ENCODE measurements at regions of chr19 and their contacts with region 1.

Region 1: DNA sequence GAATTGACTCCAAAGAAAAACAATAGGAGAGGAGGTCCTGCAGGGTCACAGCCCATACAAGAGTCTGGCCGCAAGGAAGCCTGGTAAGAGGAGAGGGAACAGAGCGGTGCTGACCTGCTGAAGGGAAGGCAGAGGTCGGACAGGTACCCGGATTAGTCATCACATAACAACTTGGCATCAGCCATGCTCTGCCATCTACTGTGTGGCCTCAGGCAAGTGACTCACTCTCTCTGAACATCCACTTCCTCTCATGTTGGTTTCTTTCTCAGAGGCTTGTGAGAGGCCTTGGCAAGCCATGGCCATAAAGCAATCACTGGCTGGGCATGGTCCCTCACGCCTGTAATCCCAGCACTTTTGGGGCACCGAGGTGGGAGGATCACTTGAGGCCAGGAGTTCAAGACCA is 7.4 kb upstream of the CAPNS1 start:
- DNase-seq: peak; percentile 88 to 99
- H3K4me3 ChIP-seq: no peak overlapping the region
- H3K27ac ChIP-seq: peak overlapping the region; percentile 82
- H3K4me1 ChIP-seq: peaks cover 64% of the 10 kb centered on the region
- H3K27me3 ChIP-seq: no peaks in the 10 kb centered on the region
- CTCF ChIP-seq: no peak

Region 2: GRCh38 chr19:36054119-36054732 is 78.3 kb before region 1 on chr19 and contains the start of gene THAP8:
- CTCF ChIA-PET with region 1: no interaction called
- POLR2A ChIA-PET with region 1: interaction called, 13 read pairs
- intact Hi-C with region 1: no loop called
- DNase-seq: peak; percentile 94 to 99
- H3K4me3 ChIP-seq: peak within 1 kb of the TSS; percentile 90
- H3K27ac ChIP-seq: peak within 1 kb of the TSS; percentile 69
- H3K4me1 ChIP-seq: peaks cover 12% of the 10 kb centered on the region; the same call in 1 of the 2 replicates
- H3K27me3 ChIP-seq: no peaks in the 10 kb centered on the region
- CTCF ChIP-seq: peak; percentile 31; the same call in 1 of the 2 replicates
- total RNA-seq, gene THAP8: 5.2 and 6.2 TPM in 2 replicates

Region 3: DNA sequence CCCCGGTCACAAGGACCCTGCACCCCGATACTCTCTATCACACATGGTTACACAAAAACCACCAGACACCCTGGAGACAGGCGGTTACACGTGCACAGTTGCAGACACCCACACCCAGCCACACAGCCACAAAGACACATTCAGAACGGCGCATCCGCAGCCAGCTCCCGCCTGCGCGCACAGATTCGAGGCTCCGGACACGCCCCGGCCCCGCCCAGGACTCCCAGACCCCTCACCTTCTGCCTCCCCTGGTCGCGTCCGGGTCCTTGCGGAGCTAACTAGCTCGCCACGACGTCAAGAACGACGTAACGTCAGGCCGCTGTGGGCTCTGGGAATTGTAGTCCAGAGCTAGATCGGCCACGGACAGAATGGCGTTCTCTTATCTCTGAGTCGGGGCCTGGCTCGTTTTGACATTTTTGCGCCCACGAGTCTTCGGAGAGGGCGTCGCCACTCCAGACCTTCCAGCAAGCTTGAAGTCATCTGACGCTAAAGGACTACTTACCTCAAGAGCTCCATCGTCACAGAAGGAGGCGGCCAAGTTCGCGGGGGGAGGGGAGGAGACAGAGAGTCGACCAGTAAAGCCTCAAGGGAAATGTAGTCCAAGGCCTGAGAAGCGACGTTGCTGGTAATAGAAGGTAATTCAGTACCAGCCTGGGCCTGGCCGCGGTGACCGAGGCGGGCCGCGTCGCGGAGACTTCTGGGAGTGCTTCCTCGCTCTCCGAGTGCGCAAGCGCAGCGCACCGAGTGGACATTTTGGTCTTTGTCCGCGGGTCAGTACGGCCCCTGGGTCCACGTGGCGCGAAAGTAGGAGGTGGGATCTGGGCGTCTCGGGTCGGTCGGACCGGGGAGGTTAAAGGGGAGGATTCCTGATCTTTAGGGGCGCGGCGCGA is 82.1 kb after region 1 on chr19 and contains the starts of genes ZNF146 and ZNF565:
- CTCF ChIA-PET with region 1: no interaction called
- POLR2A ChIA-PET with region 1: interaction called, 4 read pairs
- intact Hi-C with region 1: loop called (anchors 2 kb)
- DNase-seq: peak; percentile 95
- H3K4me3 ChIP-seq: peak within 1 kb of the TSS; percentile 70
- H3K27ac ChIP-seq: peak within 1 kb of the TSS; percentile 57
- H3K4me1 ChIP-seq: peaks cover 5% of the 10 kb centered on the region
- H3K27me3 ChIP-seq: no peaks in the 10 kb centered on the region
- CTCF ChIP-seq: no peak
- total RNA-seq, gene ZNF146: 53.1 and 68.0 TPM in 2 replicates
- total RNA-seq, gene ZNF565: 3.3 and 4.3 TPM in 2 replicates

Region 4: GRCh38 chr19:36573020-36573885 is 440.8 kb after region 1 on chr19 and contains the start of gene ZNF529:
- CTCF ChIA-PET with region 1: no interaction called
- POLR2A ChIA-PET with region 1: no interaction called
- intact Hi-C with region 1: loop called (anchors 5 kb)
- DNase-seq: peak; percentile 84 to 87
- H3K4me3 ChIP-seq: peak within 1 kb of the TSS; percentile 90
- H3K27ac ChIP-seq: peak within 1 kb of the TSS; percentile 55
- H3K4me1 ChIP-seq: peaks cover 6% of the 10 kb centered on the region; the same call in 1 of the 2 replicates
- H3K27me3 ChIP-seq: no peaks in the 10 kb centered on the region
- CTCF ChIP-seq: no peak
- total RNA-seq, gene ZNF529: 4.0 and 4.2 TPM in 2 replicates